AG04450 (cell line): ENCODE measurements at regions of chr20 and their contacts with region 1.

Region 1: GRCh38 chr20:44217342-44218092 is 6.9 kb upstream of the OSER1 start:
- DNase-seq: peak; percentile 46
- H3K4me3 ChIP-seq: no peak overlapping the region
- H3K27ac ChIP-seq: no peak overlapping the region
- H3K27me3 ChIP-seq: no peaks in the 10 kb centered on the region
- CTCF ChIP-seq: peak; percentile 97

Region 2: DNA sequence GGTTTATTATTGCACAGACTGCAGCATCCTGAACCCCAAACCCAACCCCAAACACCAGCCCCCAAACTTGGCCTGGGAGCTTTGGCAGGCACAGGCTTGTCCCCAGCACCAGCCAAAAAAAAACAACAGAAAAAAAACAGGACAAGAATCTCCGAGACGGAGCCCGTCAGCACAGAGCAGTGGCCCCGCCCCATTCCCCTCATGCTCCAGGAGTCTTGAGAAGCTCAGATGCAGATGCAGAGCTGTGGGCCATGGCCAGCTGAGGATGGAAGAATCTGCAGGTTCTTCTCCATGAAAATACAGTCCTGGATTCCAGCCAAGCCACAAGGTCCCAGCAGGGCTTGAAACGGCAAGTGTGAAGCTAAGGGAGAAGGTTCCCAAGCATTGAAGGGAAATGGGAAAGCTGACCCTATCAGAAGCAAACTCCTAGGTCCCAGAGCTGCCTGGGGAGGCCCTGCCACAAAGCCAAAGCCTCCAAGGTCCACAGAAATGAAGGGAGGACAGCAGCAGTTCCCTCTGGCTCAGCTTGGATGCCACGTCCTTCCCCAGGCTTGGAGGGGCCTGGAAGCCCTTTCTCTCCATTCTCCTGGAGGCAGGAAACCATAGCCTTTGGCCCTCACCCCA is 105.7 kb before region 1 on chr20:
- CTCF ChIA-PET with region 1: interaction called, 32 read pairs
- POLR2A ChIA-PET with region 1: no interaction called
- DNase-seq: no peak
- H3K4me3 ChIP-seq: no peak overlapping the region
- H3K27ac ChIP-seq: no peak overlapping the region
- H3K27me3 ChIP-seq: peaks cover 3% of the 10 kb centered on the region
- CTCF ChIP-seq: no peak

Region 3: DNA sequence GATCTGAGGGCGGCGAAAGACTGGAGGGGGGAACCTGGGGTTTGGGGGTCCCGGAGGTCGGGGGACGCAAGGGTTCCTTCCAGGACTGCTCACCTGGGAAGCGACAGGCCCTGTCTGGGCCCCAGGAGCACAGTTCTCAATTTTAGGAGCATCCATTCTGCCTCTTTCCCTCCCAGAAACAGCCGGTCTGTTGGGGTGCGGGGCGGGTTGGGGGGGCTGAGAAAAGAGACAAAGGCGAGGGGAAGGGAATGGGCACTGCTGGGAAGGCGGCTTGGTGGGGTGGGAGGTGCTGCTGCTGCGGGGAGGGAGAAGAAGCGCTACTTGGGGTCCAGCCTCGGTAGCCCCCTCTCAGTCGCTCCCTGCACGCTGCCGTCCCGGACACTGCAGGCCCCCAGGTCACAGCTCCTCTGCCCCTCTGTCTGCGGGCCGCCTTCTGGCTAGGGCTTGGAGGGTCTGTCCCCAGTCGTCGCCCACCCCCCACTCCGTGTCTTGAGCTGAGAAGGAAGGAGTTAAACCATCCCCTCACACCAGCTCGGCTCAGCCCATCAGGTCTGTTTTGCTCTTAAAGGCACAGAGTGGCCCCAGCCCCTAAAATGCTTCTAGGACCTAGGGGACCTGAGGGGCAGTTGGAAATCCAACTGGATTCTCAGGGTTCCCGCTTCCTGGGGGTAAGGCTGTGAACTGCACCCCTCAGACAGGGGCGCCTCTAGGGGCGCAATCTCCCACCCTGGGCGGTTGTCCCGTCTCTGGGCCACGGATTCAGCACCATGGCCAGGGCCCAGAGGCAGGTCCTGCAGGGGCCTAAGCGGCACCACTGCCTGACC is 30.3 kb after region 1 on chr20:
- CTCF ChIA-PET with region 1: interaction called, 10 read pairs
- POLR2A ChIA-PET with region 1: no interaction called
- DNase-seq: no peak
- H3K4me3 ChIP-seq: no peak overlapping the region
- H3K27ac ChIP-seq: no peak overlapping the region
- H3K27me3 ChIP-seq: peaks cover 21% of the 10 kb centered on the region
- CTCF ChIP-seq: peak; percentile 54

Region 4: DNA sequence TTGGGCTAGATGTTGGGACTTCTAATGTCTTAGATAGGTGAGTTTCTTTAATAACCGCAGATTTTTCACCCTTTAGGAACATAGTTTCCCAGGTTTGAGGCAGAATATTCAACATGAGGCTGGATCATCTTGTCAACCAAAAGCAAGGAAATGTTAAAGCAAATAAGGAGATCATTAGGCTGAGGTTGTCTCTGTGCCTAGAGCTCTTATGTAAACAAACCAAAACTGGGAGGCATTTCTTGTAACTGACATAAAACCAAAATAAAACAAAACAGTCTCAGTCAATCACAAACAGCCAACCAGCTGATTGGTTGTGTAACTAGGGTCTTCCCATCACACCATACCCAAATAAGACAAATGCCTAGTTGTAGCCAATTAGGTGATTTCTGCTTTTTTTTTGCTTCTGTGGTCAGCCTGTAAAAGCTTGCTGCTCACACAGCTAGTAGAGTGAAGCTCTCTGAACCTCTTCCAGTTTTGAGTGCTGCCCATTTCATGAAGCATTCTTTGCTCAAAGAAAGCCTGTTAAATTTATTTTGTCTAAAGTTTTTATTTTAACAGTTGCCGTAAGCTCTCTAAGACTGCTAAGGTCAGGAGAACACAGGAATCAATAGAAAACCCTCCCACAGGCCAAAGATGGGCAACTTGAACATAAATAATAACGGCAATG is 102.4 kb after region 1 on chr20:
- CTCF ChIA-PET with region 1: interaction called, 287 read pairs
- POLR2A ChIA-PET with region 1: no interaction called
- DNase-seq: no peak
- H3K4me3 ChIP-seq: no peak overlapping the region
- H3K27ac ChIP-seq: no peak overlapping the region
- H3K27me3 ChIP-seq: no peaks in the 10 kb centered on the region
- CTCF ChIP-seq: no peak

Region 5: DNA sequence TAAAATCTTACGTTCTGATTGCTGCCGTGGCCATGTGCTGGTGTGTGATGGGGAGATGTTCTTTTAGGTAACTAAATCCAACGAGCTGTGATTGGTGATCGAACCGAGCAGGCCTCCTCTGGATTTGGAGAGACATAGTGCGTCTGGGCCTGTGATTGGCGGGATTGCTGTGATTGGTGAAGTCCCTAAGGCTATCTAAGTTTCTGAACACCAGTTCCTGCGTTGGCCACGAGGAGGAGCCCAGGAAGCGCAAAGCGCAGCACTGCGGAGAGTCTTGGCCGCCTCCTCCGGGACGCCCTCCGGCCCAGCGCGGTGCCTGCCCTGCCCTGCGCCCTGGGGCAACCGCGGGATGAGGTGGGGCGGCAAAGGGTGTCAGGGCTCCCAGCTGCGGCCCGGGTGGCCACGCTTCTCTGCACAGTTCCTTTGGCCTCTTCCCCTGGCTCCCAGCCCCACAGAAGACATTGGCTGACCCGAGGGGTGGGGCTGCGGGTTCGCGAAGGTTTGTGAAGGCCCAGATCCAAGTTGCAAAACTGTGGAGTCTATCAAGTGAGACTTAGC is 171.0 kb after region 1 on chr20:
- CTCF ChIA-PET with region 1: interaction called, 64 read pairs
- POLR2A ChIA-PET with region 1: no interaction called
- DNase-seq: peak; percentile 21
- H3K4me3 ChIP-seq: no peak overlapping the region
- H3K27ac ChIP-seq: no peak overlapping the region
- H3K27me3 ChIP-seq: peaks cover 19% of the 10 kb centered on the region
- CTCF ChIP-seq: peak; percentile 81

Region 6: GRCh38 chr20:44475694-44476560 is 258.4 kb after region 1 on chr20 and contains the start of gene TTPAL:
- CTCF ChIA-PET with region 1: interaction called, 33 read pairs
- POLR2A ChIA-PET with region 1: no interaction called
- DNase-seq: peak; percentile 44
- H3K4me3 ChIP-seq: peak within 1 kb of the TSS; percentile 96
- H3K27ac ChIP-seq: peak within 1 kb of the TSS; percentile 61
- H3K27me3 ChIP-seq: no peaks in the 10 kb centered on the region
- CTCF ChIP-seq: peak; percentile 36; the same call in 1 of the 2 replicates
- polyA plus RNA-seq, gene TTPAL: 11.2 and 12.6 TPM in 2 replicates

Region 7: GRCh38 chr20:44683263-44684046 is 465.9 kb after region 1 on chr20:
- CTCF ChIA-PET with region 1: interaction called, 22 read pairs
- POLR2A ChIA-PET with region 1: no interaction called
- DNase-seq: no peak
- H3K4me3 ChIP-seq: no peak overlapping the region
- H3K27ac ChIP-seq: no peak overlapping the region
- H3K27me3 ChIP-seq: peaks cover 8% of the 10 kb centered on the region
- CTCF ChIP-seq: peak; percentile 74